H1 (cell line): ENCODE measurements at regions of chr7 and their contacts with region 1.

Region 1: DNA sequence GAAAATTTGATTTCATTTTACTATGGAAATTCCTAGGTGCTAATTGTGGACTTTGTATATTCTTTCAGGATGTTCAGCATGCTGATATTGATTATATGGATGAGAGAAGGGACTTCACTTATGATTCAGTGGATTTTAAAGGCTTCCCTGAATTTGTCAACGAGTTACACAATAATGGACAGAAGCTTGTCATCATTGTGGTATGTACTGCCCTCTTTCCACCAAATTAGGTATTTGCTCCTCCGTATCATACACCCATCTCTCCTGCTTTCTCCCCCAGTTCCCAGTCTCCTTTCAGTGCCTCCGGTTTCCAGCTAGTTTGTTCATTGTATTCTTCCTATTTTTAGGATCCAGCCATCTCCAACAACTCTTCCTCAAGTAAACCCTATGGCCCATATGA is 34.6 kb downstream of the MGAM start:
- DNase-seq: no peak
- H3K4me3 ChIP-seq: no peak overlapping the region
- H3K27ac ChIP-seq: no peak overlapping the region
- H3K4me1 ChIP-seq: no peaks in the 10 kb centered on the region
- H3K27me3 ChIP-seq: no peaks in the 10 kb centered on the region
- CTCF ChIP-seq: peak in 2 of 3 experiments; percentile 17 to 44; a peak in 2 of 4 replicates
- EP300 ChIP-seq: no peak
- POLR2A ChIP-seq: no peak
- RAD21 ChIP-seq: peak; percentile 55 to 59

Region 2: DNA sequence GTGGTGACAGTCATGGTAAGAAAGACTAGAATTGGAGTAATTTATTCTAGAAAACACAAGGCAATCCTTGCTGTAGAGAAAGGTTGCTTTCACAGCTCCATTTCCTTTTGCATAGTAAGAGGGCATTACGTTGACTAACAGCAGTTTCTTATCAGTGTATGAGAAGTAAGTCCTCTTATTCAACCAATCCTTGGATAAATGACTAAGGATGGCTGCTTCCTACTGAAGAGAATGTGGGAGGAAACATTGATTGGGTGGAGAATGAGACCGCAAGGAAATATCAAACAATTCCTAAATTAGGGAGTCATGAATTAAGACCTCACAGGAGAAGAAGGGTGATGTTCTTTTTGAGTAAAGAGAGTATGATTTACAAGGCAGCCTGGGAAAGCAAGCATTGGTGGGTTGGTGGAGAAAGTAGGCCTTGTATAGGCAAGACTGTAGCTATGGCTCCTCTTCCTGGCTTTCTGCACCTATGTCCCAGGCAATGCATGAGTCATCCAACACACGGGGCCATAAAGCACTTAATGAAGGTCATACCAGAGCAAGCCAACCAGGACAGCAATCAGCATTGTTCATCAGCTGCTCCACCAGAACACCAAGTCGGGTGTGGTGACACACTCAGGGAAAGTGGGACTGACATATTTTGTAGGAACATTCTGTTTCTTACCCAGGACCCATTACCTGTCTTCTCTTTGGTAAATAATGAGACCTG is 29.0 kb before region 1 on chr7:
- CTCF ChIA-PET with region 1: no interaction called
- POLR2A ChIA-PET with region 1: no interaction called
- DNase-seq: no peak
- H3K4me3 ChIP-seq: no peak overlapping the region
- H3K27ac ChIP-seq: no peak overlapping the region
- H3K4me1 ChIP-seq: no peaks in the 10 kb centered on the region
- H3K27me3 ChIP-seq: no peaks in the 10 kb centered on the region
- CTCF ChIP-seq: no peak
- EP300 ChIP-seq: no peak
- POLR2A ChIP-seq: no peak
- RAD21 ChIP-seq: no peak

Region 3: GRCh38 chr7:142012825-142013511 is 17.3 kb before region 1 on chr7:
- CTCF ChIA-PET with region 1: interaction called, 11 read pairs
- POLR2A ChIA-PET with region 1: no interaction called
- DNase-seq: no peak
- H3K4me3 ChIP-seq: no peak overlapping the region
- H3K27ac ChIP-seq: no peak overlapping the region
- H3K4me1 ChIP-seq: no peaks in the 10 kb centered on the region
- H3K27me3 ChIP-seq: no peaks in the 10 kb centered on the region
- CTCF ChIP-seq: peak in 2 of 3 experiments; percentile 43 to 45; a peak in 2 of 4 replicates
- EP300 ChIP-seq: no peak
- POLR2A ChIP-seq: no peak
- RAD21 ChIP-seq: peak; percentile 37 to 49

Region 4: GRCh38 chr7:142094861-142095260 is 64.6 kb after region 1 on chr7:
- CTCF ChIA-PET with region 1: interaction called, 10 read pairs
- POLR2A ChIA-PET with region 1: no interaction called
- DNase-seq: no peak
- H3K4me3 ChIP-seq: no peak overlapping the region
- H3K27ac ChIP-seq: no peak overlapping the region
- H3K4me1 ChIP-seq: no peaks in the 10 kb centered on the region
- H3K27me3 ChIP-seq: no peaks in the 10 kb centered on the region
- CTCF ChIP-seq: no peak
- EP300 ChIP-seq: no peak
- POLR2A ChIP-seq: no peak
- RAD21 ChIP-seq: no peak

Region 5: GRCh38 chr7:142168745-142169144 is 138.5 kb after region 1 on chr7:
- CTCF ChIA-PET with region 1: no interaction called
- POLR2A ChIA-PET with region 1: no interaction called
- DNase-seq: no peak
- H3K4me3 ChIP-seq: no peak overlapping the region
- H3K27ac ChIP-seq: no peak overlapping the region
- H3K4me1 ChIP-seq: no peaks in the 10 kb centered on the region
- H3K27me3 ChIP-seq: no peaks in the 10 kb centered on the region
- CTCF ChIP-seq: no peak
- EP300 ChIP-seq: no peak
- POLR2A ChIP-seq: no peak
- RAD21 ChIP-seq: no peak

Region 6: DNA sequence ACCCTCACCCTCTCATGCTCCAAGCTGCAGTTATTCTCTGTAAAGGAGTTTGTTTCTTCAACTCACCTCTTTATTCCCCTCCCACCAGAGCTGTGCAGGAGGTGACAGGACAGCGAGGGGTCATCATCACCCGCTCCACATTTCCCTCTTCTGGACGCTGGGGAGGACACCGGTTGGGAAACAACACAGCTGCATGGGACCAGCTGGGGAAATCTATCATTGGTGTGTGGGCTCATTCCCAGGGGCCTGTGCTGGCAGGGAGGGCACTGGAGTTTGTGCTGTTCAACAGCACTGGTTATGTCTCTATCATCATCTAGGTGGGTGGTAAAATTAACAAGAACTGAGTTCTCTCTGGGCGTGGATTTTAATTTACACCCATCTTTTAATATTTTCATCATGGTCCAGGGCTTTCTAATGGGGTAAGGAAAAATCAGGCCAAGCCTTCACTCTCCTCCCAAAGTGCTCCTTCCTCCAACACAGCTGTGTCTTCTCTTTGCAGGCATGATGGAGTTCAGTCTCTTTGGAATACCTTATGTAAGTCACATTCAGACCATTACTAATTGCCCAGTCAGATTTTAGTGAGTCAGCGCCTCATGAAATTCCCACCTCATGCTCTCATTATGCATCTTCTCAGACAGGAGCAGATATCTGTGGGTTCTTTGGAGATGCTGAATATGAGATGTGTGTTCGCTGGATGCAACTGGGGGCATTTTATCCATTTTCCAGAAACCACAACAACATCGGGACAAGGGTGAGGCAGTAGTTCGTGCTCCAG is 166.0 kb after region 1 on chr7:
- CTCF ChIA-PET with region 1: no interaction called
- POLR2A ChIA-PET with region 1: no interaction called
- DNase-seq: no peak
- H3K4me3 ChIP-seq: no peak overlapping the region
- H3K27ac ChIP-seq: no peak overlapping the region
- H3K4me1 ChIP-seq: no peaks in the 10 kb centered on the region
- H3K27me3 ChIP-seq: no peaks in the 10 kb centered on the region; a peak in 1 of 7 replicates
- CTCF ChIP-seq: no peak
- EP300 ChIP-seq: no peak
- POLR2A ChIP-seq: no peak
- RAD21 ChIP-seq: no peak